Heart right ventricle (tissue), 16 donors: ENCODE measurements at regions of chr3 and their contacts with region 1.

Region 1: DNA sequence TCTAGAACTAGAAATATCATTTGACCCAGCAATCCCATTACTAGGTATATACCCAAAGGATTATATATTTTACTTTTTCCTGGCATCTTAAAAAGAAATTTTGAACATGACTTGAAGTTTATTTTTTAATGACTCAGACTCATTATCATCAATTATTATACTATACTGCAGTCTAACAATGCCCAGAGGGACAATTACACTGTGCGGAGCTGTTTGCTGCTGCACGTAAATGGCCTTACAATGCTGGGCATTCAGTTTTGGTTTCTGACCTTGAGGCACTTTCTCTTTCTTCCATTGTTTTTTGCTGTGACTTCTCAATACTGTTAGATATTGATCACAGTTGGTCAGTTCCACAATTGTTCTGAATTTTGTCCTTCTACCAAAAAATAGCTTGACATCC is 128.8 kb downstream of the GBE1 start:
- DNase-seq: no peak
- ATAC-seq: no peak
- H3K4me3 ChIP-seq: no peak overlapping the region
- H3K27ac ChIP-seq: no peak overlapping the region
- H3K4me1 ChIP-seq: no peaks in the 10 kb centered on the region
- H3K27me3 ChIP-seq: no peaks in the 10 kb centered on the region
- CTCF ChIP-seq: no peak

Region 2: DNA sequence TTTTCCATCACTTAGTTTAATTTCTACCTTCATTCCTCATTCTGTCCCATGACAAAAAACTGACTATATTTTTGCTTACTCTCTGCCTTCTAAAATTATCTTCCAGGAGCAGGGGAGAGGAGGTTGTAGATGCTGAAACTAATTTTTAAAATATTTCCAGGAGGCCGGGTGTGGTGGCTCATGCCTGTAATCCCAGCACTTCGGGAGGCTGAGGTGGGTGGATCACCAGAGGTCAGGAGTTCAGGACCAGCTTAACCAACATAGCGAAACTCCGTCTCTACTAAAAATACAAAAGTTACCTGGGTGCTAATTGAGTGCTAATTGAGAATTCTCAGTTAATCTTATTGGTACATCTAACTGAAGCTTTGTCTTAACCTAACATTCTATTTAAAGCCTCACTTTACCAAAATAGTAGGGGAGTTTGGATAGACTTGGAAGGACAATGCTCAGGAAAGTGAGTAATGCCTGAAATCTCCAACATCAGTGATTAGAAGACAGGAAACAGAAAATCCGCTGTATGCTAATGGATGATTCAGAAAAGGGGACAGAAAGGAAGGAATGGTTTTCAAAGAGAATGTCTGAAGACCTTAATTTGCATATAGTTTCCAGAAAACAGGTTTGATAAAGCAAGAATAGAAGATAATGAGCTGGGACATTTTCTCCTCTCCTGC is 207.3 kb before region 1 on chr3:
- intact Hi-C with region 1: loop called in 1 of 10 experiments (anchors 10 kb)
- DNase-seq: no peak
- ATAC-seq: no peak
- H3K4me3 ChIP-seq: no peak overlapping the region
- H3K27ac ChIP-seq: no peak overlapping the region
- H3K4me1 ChIP-seq: no peaks in the 10 kb centered on the region
- H3K27me3 ChIP-seq: no peaks in the 10 kb centered on the region
- CTCF ChIP-seq: no peak

Region 3: GRCh38 chr3:81612768-81613167 is 19.9 kb before region 1 on chr3:
- intact Hi-C with region 1: no loop called
- DNase-seq: no peak
- ATAC-seq: no peak
- H3K4me3 ChIP-seq: no peak overlapping the region
- H3K27ac ChIP-seq: no peak overlapping the region
- H3K4me1 ChIP-seq: peaks cover 0 to 10% (median 0%) of the 10 kb centered on the region in 9 donors
- H3K27me3 ChIP-seq: no peaks in the 10 kb centered on the region
- CTCF ChIP-seq: no peak